Activated naive CD4-positive, alpha-beta T cell treated with anti-CD3 and anti-CD28 coated beads, Interleukin-2, amount 10 ng/mL, durations not matched to agents 7 days and 5 days (primary cell): ENCODE measurements at regions of chr6 and their contacts with region 1.

Region 1: GRCh38 chr6:37566111-37566949 is 66.6 kb upstream of the CCDC167 start:
- DNase-seq: peak; percentile 79
- H3K4me3 Mint-ChIP-seq: no peak overlapping the region
- H3K27ac Mint-ChIP-seq: no peak overlapping the region
- H3K4me1 Mint-ChIP-seq: peaks cover 3% of the 10 kb centered on the region
- H3K27me3 Mint-ChIP-seq: peaks cover 55% of the 10 kb centered on the region

Region 2: DNA sequence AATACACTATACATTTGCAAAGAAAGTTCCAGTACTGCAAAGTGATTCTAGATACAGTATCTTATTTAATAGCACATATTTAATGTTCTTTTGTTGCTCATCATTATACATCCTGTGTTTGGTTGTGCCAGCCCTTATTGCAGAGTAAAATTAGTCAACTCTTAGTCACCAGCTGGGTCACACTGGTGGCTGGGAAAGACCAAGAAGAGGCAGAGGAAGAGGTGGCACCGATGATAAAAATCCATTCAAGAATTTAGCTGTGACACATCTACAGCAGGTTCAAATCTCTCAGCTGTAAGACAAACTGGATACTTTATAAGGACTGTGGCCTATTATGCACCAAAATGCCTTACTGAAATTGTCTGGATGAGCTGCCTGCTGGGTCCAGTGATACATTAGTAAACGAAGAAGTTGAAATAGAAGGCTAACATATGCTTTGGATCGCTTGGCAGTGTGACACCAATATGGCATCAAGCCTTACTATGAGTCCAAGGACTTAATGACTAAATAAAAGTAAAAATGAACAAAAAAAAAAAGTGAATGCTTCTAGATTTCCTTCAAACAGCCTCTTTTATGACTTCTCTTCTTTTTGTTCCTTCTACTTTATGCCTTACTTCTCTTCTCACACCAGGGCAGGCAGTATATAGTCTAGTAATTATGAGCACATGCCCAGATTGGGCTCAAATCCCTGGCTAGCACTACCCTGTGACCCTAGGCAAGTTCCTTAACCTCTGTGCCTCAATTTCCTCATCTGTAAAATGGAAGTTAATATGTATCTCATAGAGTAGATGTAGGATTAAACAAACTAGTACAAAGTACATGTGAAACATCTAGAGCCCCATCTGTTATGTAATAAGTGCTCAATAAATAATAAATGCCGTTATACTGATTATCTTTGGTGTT is 241.9 kb before region 1 on chr6:
- CTCF ChIA-PET with region 1: interaction called, 14 read pairs
- DNase-seq: no peak
- H3K4me3 Mint-ChIP-seq: no peak overlapping the region
- H3K27ac Mint-ChIP-seq: no peak overlapping the region
- H3K4me1 Mint-ChIP-seq: peaks cover 2% of the 10 kb centered on the region
- H3K27me3 Mint-ChIP-seq: no peaks in the 10 kb centered on the region

Region 3: GRCh38 chr6:37393381-37393929 is 172.9 kb before region 1 on chr6:
- CTCF ChIA-PET with region 1: no interaction called
- DNase-seq: no peak
- H3K4me3 Mint-ChIP-seq: no peak overlapping the region
- H3K27ac Mint-ChIP-seq: no peak overlapping the region
- H3K4me1 Mint-ChIP-seq: peaks cover 7% of the 10 kb centered on the region
- H3K27me3 Mint-ChIP-seq: peaks cover 10% of the 10 kb centered on the region

Region 4: GRCh38 chr6:37483917-37484785 is 82.2 kb before region 1 on chr6:
- CTCF ChIA-PET with region 1: interaction called, 33 read pairs
- DNase-seq: peak; percentile 81
- H3K4me3 Mint-ChIP-seq: no peak overlapping the region
- H3K27ac Mint-ChIP-seq: no peak overlapping the region
- H3K4me1 Mint-ChIP-seq: peaks cover 22% of the 10 kb centered on the region
- H3K27me3 Mint-ChIP-seq: no peaks in the 10 kb centered on the region

Region 5: GRCh38 chr6:37489660-37490361 is 76.5 kb before region 1 on chr6:
- CTCF ChIA-PET with region 1: interaction called, 33 read pairs
- DNase-seq: no peak
- H3K4me3 Mint-ChIP-seq: no peak overlapping the region
- H3K27ac Mint-ChIP-seq: peak overlapping the region; percentile 64
- H3K4me1 Mint-ChIP-seq: peaks cover 35% of the 10 kb centered on the region
- H3K27me3 Mint-ChIP-seq: no peaks in the 10 kb centered on the region

Region 6: GRCh38 chr6:37495244-37495934 is 70.9 kb before region 1 on chr6:
- CTCF ChIA-PET with region 1: interaction called, 25 read pairs
- DNase-seq: no peak
- H3K4me3 Mint-ChIP-seq: no peak overlapping the region
- H3K27ac Mint-ChIP-seq: no peak overlapping the region
- H3K4me1 Mint-ChIP-seq: peaks cover 45% of the 10 kb centered on the region
- H3K27me3 Mint-ChIP-seq: no peaks in the 10 kb centered on the region

Region 7: DNA sequence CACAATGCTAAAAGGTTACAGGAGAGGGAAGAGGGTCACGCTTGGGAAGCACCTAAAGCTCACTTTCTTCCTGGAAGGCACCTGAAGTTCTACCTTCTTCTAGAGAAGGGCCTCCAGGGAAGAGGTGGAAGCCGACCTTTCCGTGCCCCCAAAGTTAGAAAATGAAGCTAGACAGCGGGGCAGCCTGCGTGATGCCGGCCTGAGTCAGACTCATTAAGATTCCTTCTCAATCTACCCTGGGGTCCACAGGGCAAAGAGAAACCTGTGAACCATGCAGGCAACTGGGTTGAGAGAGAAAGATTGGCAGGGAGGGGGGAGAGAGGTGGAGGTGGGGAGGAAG is 11.9 kb before region 1 on chr6:
- CTCF ChIA-PET with region 1: interaction called, 15 read pairs
- DNase-seq: no peak
- H3K4me3 Mint-ChIP-seq: no peak overlapping the region
- H3K27ac Mint-ChIP-seq: no peak overlapping the region
- H3K4me1 Mint-ChIP-seq: peaks cover 11% of the 10 kb centered on the region
- H3K27me3 Mint-ChIP-seq: peaks cover 37% of the 10 kb centered on the region

Region 8: DNA sequence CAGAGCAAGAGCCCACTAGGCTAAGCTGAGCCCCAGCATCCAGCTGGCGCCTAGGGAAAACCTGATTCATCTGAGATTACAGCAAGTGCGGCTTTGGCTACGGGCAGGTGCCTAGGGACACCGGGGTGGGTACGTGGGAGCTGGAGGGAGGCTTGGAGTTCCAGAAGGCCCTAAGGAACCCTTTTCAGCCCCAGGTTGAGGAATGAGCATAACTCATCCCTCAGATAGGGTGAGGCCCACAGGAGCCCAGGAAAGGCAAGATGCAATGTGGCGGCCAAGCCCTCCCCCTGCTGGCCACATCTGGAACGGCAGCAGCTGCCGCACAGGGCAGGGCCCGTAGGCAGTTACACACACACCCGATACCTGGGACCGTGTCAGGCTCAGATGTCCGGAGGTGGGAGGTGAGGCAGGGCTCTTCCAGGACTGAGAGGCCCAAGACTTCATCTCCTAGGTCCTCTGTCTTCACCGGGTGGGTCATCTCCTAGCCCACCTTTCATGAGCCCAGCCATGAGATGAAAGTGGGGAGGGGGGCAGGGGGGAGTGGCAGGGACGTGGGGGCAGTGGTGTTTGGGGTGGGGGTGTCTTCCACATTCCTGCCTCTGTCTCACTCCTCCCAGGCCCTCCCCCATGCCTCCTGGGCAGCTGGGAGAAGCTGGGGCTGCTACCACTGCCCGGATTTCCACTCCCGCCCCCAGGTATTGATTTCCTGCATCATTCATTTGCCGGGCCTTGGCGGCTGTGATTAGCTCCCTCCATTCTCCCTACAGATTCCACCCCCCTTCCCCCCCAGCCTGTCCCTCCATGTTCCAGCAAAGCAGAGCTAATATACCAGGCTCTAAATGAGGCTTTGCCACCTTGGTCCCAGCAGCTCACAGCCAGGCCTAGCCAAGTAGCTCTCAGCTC is 125.8 kb after region 1 on chr6:
- CTCF ChIA-PET with region 1: interaction called, 10 read pairs
- DNase-seq: peak; percentile 86
- H3K4me3 Mint-ChIP-seq: no peak overlapping the region
- H3K27ac Mint-ChIP-seq: no peak overlapping the region
- H3K4me1 Mint-ChIP-seq: peaks cover 30% of the 10 kb centered on the region
- H3K27me3 Mint-ChIP-seq: peaks cover 36% of the 10 kb centered on the region

Region 9: DNA sequence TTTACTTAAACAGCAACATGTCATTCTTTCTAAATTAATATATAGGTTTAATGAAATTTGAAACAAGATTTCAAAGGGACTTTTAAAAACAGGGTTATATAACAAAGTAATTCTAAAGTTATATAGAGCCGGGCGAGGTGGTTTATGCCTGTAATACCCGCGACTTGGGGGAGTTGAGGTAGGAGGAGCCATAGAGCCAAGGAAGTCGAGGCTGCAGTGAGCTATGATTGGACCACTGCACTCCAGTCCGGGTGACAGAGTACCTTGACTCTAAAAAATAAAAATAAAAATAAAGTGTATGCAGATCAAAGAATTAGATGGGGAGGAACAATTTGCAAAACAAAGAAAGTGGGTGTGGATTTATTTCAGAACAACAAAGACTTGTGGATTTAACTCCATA is 1331.2 kb after region 1 on chr6:
- CTCF ChIA-PET with region 1: no interaction called
- DNase-seq: no peak
- H3K4me3 Mint-ChIP-seq: no peak overlapping the region
- H3K27ac Mint-ChIP-seq: no peak overlapping the region
- H3K4me1 Mint-ChIP-seq: no peaks in the 10 kb centered on the region
- H3K27me3 Mint-ChIP-seq: no peaks in the 10 kb centered on the region